ENCODE measurements at regions of chr10 and their contacts with region 1.

Region 1: GRCh38 chr10:104291439-104291951 is 22.5 kb downstream of the GSTO2 start:
- DNase-seq: no peak
- H3K4me3 ChIP-seq: no peak overlapping the region
- H3K27ac ChIP-seq: no peak overlapping the region
- H3K27me3 ChIP-seq: no peaks in the 10 kb centered on the region
- CTCF ChIP-seq: peak; percentile 100

Region 2: DNA sequence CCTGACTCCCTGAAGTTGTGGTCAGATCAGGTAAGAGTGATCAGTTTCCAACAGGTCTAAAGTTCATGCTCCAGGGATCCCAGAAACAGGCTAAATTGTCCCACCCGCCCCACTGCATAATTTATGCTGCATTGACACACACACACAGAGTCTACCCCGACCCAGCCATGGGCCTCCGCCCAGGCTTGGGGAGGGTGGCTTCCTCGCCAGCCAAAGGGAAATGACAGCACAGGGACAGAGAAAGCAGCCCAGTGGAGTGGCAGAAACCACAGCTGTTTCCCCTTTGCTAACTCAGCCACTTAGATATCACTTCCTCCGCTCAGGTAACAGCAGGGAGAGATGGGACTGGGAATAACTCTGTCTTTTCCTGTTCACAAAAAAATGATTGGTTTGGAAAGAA is 445.5 kb before region 1 on chr10:
- CTCF ChIA-PET with region 1: no interaction called
- POLR2A ChIA-PET with region 1: no interaction called
- DNase-seq: no peak
- H3K4me3 ChIP-seq: no peak overlapping the region
- H3K27ac ChIP-seq: no peak overlapping the region
- H3K27me3 ChIP-seq: no peaks in the 10 kb centered on the region
- CTCF ChIP-seq: no peak

Region 3: GRCh38 chr10:104254493-104255310 is 36.8 kb before region 1 on chr10 and contains the start of gene GSTO1:
- CTCF ChIA-PET with region 1: interaction called, 42 read pairs
- POLR2A ChIA-PET with region 1: no interaction called
- DNase-seq: peak; percentile 46
- H3K4me3 ChIP-seq: peak within 1 kb of the TSS; percentile 85
- H3K27ac ChIP-seq: peak within 1 kb of the TSS; percentile 95
- H3K27me3 ChIP-seq: no peaks in the 10 kb centered on the region
- CTCF ChIP-seq: 0 out of 2 replicates have a peak, but pooled peaks have one; percentile 2
- polyA plus RNA-seq, gene GSTO1: 185 and 227 TPM in 2 replicates

Region 4: DNA sequence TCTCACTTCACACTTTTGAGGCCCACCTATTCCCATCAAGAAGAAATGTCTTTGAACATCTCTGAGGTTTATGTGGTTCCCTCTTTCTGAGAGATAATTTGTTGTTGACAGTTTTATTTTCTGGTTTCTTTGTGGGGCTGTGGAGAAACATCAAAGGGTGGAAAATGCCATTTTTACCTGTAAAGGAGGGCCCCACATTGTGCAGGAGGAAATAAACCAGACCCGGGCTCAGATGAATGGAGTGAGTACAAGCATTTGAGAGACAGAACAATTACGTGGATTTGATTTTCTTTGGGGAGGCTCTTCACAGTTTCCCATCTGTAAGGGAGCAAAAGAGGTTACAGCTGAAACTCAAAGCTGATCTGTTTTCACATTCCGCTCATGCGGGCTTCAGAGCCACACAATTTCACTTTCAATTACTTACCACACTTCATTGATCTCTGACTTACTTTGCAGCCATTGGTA is 17.0 kb after region 1 on chr10:
- CTCF ChIA-PET with region 1: interaction called, 85 read pairs
- POLR2A ChIA-PET with region 1: no interaction called
- DNase-seq: no peak
- H3K4me3 ChIP-seq: no peak overlapping the region
- H3K27ac ChIP-seq: no peak overlapping the region
- H3K27me3 ChIP-seq: no peaks in the 10 kb centered on the region
- CTCF ChIP-seq: no peak

Region 5: DNA sequence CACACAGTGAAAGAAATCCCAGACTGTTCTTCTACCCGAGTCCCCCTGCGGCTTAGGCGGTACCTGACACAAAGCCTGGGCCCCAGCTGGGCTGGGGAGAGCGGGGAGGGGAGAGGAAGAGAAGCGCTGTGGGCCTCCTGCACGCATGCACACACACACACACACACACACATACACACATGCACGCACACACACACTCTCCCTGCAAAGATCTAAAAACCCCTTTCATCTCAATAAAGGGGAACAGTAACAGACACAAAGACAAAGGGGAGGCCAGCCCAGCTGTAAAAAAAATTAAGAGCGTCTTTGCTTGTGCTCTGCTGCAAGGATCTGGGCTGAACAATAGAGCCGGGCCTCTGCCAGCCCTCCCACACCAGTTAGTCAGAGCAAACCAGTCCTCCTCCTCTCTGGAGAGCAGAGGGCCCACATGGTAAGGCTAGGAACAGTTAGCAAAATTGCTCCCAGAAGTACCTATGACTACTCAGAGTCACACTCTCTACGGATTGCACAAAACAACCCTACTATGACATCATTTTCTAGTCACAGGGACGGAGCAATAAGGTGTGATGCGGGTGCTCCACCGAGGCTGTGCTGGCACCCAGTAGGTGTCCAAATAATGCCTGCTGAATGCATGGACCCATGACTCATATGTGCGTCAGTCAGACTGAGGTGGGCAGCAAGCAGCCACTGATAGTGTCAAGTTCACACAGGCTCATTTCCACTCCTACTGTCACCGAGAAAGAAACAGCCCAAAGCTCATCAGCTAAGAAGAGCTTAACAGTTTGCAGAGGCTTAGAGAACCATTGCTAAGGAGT is 37.6 kb after region 1 on chr10:
- CTCF ChIA-PET with region 1: interaction called, 99 read pairs
- POLR2A ChIA-PET with region 1: no interaction called
- DNase-seq: no peak
- H3K4me3 ChIP-seq: peak overlapping the region; percentile 57
- H3K27ac ChIP-seq: peak overlapping the region; percentile 96
- H3K27me3 ChIP-seq: no peaks in the 10 kb centered on the region
- CTCF ChIP-seq: no peak

Region 6: DNA sequence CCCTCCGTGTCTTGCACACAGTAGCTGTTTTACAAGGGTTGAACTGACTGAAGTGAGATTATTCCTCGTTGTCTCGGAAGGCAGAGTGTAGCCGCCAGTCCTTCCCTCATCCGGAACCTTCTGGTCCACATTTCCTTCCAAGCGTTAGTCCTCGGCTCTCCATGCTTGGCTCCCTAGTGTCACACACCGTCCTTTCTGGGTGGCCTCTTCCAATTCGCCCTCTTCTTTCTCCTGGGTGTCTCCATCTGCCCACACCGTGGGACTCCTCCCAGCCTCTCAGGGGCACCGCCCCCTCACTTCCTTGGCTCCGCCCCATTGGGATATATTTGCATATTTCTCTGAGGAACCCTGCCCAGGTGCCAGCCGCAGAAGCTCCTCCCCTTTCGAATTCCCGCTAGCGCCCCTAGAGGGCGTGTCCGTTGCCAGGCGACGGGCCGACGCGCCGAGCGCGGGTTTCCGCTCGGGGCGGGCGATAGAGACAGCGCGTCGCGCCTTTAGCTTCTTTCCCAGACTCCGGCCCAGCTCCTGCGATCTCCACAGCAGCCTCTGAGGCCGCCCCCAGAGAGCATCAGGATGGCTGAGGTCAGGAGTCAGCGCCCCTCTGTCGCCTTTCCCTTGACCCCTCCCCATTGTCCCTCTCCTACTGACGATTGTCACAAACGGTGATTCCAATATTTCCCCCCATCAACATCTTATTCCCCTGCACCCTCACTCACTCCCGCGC is 62.0 kb after region 1 on chr10 and contains the start of gene CFAP58:
- CTCF ChIA-PET with region 1: interaction called, 379 read pairs
- POLR2A ChIA-PET with region 1: no interaction called
- DNase-seq: no peak
- H3K4me3 ChIP-seq: peak within 1 kb of the TSS; percentile 68
- H3K27ac ChIP-seq: no peak within 1 kb of the TSS
- H3K27me3 ChIP-seq: no peaks in the 10 kb centered on the region
- CTCF ChIP-seq: peak; percentile 66
- polyA plus RNA-seq, gene CFAP58: 0.35 and 0.51 TPM in 2 replicates

Measured in AG04450 (cell line).